GM12878 (cell line): ENCODE measurements at regions of chr13 and their contacts with region 1.

Region 1: DNA sequence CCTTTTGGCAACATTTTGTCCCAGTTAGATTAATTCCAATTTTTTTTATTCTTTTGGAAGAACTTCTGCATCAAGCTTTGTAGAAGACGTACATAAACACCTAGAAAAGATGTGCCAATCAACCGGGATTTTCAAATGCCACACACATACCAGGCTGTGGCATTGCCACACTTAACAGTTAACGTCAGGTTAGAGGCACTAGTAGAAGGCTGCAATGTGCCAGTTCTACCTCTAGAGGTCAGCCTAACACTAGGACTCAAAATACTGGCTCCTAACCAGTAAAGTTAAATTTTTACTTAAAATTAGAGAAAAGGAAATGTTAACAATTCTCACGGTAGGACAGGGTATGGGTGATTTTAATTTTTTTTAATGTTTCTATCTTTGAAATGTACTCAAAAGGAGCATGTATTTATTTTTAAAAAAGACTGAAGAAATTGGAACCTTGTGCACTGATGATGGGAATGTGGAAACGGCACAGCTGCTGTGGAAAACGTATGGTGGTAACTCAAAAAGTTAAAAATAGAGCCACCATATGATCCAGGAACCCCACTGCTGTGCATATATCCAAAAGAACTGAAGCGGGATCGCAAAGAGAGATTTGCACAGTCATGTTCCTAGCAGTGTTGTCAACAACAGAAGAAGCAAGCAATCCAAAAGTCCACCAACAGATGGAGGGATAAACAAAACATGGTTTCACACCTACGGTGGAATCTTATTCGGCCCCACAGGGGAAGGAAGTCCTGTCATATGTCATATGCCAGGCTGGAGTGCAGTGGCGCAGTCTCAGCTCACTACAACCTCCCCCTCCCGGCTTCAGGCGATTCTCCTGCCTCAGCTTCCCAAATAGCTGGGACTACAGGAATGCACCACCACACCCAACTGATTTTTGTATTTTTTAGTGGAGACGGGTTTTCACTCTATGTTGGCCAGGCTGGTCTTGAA is 30.3 kb downstream of the CRYL1 start:
- DNase-seq: peak; percentile 40
- ATAC-seq: peak; percentile 87
- H3K4me3 ChIP-seq: no peak overlapping the region
- H3K27ac ChIP-seq: no peak overlapping the region
- H3K4me1 ChIP-seq: no peaks in the 10 kb centered on the region
- H3K27me3 ChIP-seq: no peaks in the 10 kb centered on the region
- CTCF ChIP-seq: peak; percentile 92 to 95 (median 93)
- EP300 ChIP-seq: no peak
- POLR2A ChIP-seq: no peak
- RAD21 ChIP-seq: peak; percentile 94

Region 2: DNA sequence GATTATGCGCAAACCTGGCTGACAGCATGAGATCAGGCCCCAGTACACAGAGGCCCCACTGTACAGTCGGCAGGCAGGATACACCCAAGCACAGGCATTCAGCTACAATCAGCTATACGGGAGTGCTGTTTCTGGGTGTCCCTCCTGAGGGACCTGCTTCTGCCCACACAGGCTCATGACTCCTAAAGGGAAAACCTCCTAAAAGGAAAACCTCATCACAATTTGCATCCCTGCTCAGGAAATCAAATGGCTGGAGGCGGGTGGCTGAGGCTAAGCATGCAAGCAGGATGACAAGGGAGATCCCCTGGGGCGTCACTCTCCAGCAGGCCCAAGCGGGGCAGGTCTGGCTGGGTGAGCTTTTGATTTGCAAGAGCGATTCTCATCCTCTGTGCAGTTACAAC is 69.5 kb before region 1 on chr13:
- CTCF ChIA-PET with region 1: no interaction called
- POLR2A ChIA-PET with region 1: no interaction called
- RAD21 ChIA-PET with region 1: no interaction called
- SMC1A ChIA-PET with region 1: no interaction called
- in situ Hi-C with region 1: no loop called
- intact Hi-C with region 1: no loop called
- DNase-seq: no peak
- ATAC-seq: peak; percentile 85
- H3K4me3 ChIP-seq: no peak overlapping the region
- H3K27ac ChIP-seq: no peak overlapping the region
- H3K4me1 ChIP-seq: peaks cover 17% of the 10 kb centered on the region
- H3K27me3 ChIP-seq: no peaks in the 10 kb centered on the region
- CTCF ChIP-seq: no peak
- EP300 ChIP-seq: no peak
- POLR2A ChIP-seq: no peak
- RAD21 ChIP-seq: no peak

Region 3: DNA sequence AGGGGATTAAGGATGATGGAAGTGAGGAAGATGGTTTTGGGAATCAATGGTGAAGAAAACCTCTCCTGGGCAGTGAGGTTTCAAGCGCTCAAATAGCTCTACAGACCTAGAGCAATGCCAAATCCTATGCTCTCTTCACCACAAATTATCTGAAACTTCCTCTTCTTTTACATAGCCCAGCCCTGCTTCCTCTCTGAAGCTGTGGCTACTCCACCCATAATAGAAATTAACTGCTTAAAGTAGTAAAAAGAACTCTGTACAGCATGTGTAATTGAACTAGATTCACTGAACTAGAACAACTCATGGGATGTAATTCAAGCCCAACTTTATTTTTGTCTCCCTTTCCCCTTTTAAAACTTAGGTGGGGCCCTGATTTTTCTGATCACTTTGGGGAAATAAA is 51.2 kb after region 1 on chr13:
- CTCF ChIA-PET with region 1: interaction called, 13 read pairs
- POLR2A ChIA-PET with region 1: no interaction called
- RAD21 ChIA-PET with region 1: interaction called, 4 read pairs
- SMC1A ChIA-PET with region 1: interaction called, 3 read pairs
- in situ Hi-C with region 1: no loop called
- intact Hi-C with region 1: loop called (anchors 5 kb)
- DNase-seq: no peak
- ATAC-seq: peak; percentile 45; the same call in 1 of the 3 replicates
- H3K4me3 ChIP-seq: no peak overlapping the region
- H3K27ac ChIP-seq: no peak overlapping the region
- H3K4me1 ChIP-seq: no peaks in the 10 kb centered on the region
- H3K27me3 ChIP-seq: no peaks in the 10 kb centered on the region
- CTCF ChIP-seq: no peak
- EP300 ChIP-seq: no peak
- POLR2A ChIP-seq: no peak
- RAD21 ChIP-seq: no peak

Region 4: DNA sequence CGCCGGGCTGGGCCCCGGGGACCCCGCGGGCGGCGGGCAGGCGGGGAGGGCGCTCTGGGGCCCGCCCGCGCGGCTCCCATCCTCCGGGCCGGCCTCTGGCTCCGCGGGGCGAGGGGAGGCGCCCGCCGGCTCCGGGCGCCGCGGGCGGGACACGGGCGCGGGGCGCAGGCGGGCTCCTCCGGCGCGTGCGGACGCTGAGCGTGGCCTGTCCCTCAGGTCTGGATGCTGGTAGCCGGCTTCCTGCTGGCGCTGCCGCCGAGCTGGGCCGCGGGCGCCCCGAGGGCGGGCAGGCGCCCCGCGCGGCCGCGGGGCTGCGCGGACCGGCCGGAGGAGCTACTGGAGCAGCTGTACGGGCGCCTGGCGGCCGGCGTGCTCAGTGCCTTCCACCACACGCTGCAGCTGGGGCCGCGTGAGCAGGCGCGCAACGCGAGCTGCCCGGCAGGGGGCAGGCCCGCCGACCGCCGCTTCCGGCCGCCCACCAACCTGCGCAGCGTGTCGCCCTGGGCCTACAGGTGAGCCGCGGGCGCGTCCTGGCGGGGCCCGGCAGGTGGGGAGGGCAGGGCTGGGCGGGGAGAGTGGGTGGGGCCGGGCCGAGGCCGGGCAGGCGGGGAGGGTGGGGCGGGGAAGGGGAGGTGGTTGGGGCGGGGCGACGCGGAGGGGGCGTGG is 208.6 kb after region 1 on chr13:
- CTCF ChIA-PET with region 1: interaction called, 3 read pairs
- POLR2A ChIA-PET with region 1: no interaction called
- RAD21 ChIA-PET with region 1: interaction called, 3 read pairs
- SMC1A ChIA-PET with region 1: no interaction called
- in situ Hi-C with region 1: loop called (anchors 5 kb)
- intact Hi-C with region 1: loop called (anchors 5 kb)
- DNase-seq: peak; percentile 9
- ATAC-seq: peak; percentile 95
- H3K4me3 ChIP-seq: no peak overlapping the region
- H3K27ac ChIP-seq: no peak overlapping the region
- H3K4me1 ChIP-seq: peaks cover 6% of the 10 kb centered on the region
- H3K27me3 ChIP-seq: no peaks in the 10 kb centered on the region
- CTCF ChIP-seq: peak; percentile 48 to 57 (median 54); a peak in 5 of 6 replicates
- EP300 ChIP-seq: no peak
- POLR2A ChIP-seq: peak; percentile 65
- RAD21 ChIP-seq: no peak

Region 5: DNA sequence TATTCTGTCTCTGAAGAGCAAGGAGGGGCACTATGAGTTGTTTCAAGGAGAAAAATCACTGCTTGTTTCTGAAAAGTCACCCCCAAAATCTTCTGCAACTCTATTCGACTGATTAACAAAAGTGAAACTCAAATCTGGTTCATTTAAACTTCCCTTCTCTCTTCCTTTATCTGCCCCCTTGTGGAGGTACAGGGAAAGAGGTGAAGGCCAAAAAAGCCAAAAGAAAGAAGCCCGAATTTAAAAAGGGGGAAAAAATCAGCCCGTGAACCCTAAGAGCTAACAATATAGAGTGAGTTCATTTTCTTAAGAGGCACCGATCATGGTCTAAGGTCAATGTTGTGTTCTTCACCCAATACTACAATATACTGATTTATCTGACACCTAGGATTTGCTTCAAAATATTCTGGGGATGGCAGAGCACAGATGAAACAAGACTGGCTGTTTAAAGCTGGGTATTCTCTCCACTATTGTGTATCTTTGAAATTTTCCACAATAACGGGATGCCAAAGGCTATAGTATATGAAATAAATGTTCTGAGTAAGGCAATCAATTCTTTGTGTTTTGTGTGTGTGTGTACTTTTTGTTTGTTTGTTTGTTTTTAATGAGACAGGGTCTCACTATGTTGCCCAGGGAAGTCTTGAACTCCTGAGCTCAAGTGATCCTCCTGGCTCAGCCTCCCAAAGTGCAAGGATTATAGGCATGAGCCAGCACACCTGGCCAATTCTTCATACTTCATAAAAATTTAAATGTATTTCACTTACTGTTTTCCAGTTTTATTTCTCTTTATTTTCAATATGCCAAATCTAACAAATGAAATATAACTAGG is 333.4 kb after region 1 on chr13:
- CTCF ChIA-PET with region 1: interaction called, 127 read pairs
- POLR2A ChIA-PET with region 1: no interaction called
- RAD21 ChIA-PET with region 1: interaction called, 26 read pairs
- SMC1A ChIA-PET with region 1: interaction called, 37 read pairs
- in situ Hi-C with region 1: loop called (anchors 5 kb)
- intact Hi-C with region 1: loop called (anchors 1 kb)
- DNase-seq: peak; percentile 26
- ATAC-seq: peak; percentile 90
- H3K4me3 ChIP-seq: no peak overlapping the region
- H3K27ac ChIP-seq: no peak overlapping the region
- H3K4me1 ChIP-seq: no peaks in the 10 kb centered on the region
- H3K27me3 ChIP-seq: no peaks in the 10 kb centered on the region
- CTCF ChIP-seq: peak; percentile 75 to 80 (median 76)
- EP300 ChIP-seq: no peak
- POLR2A ChIP-seq: no peak
- RAD21 ChIP-seq: peak; percentile 81

Region 6: DNA sequence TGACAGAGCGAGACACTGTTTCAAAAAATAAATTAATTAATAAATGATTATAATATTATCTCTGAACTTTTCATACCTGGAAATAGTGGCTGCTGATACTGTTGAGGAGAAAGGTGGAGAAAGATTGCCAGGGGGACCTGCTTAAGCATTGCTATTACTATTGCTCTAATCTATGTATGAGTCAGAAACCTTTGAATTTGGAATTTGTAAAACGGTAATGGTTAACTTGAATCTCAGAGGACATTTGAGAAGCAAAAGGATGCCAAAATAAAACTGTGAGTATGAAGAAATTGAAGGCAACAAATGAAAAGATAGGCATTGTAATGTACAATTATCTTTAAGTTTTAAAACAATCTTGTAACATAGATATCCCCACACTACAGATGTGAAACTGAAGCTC is 686.3 kb after region 1 on chr13:
- CTCF ChIA-PET with region 1: interaction called, 3 read pairs
- POLR2A ChIA-PET with region 1: no interaction called
- RAD21 ChIA-PET with region 1: no interaction called
- SMC1A ChIA-PET with region 1: no interaction called
- in situ Hi-C with region 1: no loop called
- intact Hi-C with region 1: loop called (anchors 10 kb)
- DNase-seq: no peak
- ATAC-seq: no peak
- H3K4me3 ChIP-seq: no peak overlapping the region
- H3K27ac ChIP-seq: no peak overlapping the region
- H3K4me1 ChIP-seq: no peaks in the 10 kb centered on the region
- H3K27me3 ChIP-seq: no peaks in the 10 kb centered on the region
- CTCF ChIP-seq: no peak
- EP300 ChIP-seq: no peak
- POLR2A ChIP-seq: no peak
- RAD21 ChIP-seq: no peak